ENCODE measurements at regions of chr9 and their contacts with region 1.

Region 1: GRCh38 chr9:81113456-81114124 is 575.8 kb downstream of the TLE1 start:
- DNase-seq: no peak
- H3K27ac ChIP-seq: no peak overlapping the region
- CTCF ChIP-seq: no peak

Region 2: GRCh38 chr9:80285326-80285725 is 828.3 kb before region 1 on chr9:
- CTCF ChIA-PET with region 1: interaction called, 11 read pairs
- POLR2A ChIA-PET with region 1: no interaction called
- DNase-seq: peak; percentile 6
- H3K27ac ChIP-seq: no peak overlapping the region
- CTCF ChIP-seq: peak; percentile 35

Measured in RWPE1 (cell line).